PC-9 (cell line): ENCODE measurements at regions of chr18 and their contacts with region 1.

Region 1: GRCh38 chr18:9731380-9731779 is 23.3 kb downstream of the RAB31 start:
- DNase-seq: peak in 1 of 2 experiments; percentile 60
- H3K4me3 ChIP-seq: no peak overlapping the region
- H3K27ac ChIP-seq: peak overlapping the region; percentile 45; the same call in 1 of the 2 replicates
- H3K4me1 ChIP-seq: peaks cover 48% of the 10 kb centered on the region
- H3K27me3 ChIP-seq: no peaks in the 10 kb centered on the region
- CTCF ChIP-seq: no peak

Region 2: DNA sequence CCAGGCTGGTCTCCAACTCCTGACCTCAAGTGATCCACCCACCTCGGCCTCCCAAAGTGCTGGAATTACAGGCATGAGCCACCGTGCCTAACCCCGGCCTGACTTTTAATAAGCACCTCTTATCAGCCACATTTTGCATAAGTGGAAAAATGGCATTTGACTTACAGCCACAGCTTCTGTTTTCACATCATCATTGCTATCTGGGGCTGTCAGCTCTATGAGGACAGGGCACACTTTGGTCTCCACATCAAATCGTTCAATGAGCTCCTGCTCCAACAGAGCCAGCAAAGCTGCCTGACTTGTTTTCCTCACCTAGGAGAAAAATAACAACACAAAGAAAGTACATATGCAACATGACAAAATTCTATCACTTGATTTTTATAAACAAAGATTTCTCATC is 143.5 kb before region 1 on chr18:
- CTCF ChIA-PET with region 1: no interaction called
- POLR2A ChIA-PET with region 1: interaction called, 11 read pairs
- intact Hi-C with region 1: no loop called
- DNase-seq: no peak
- H3K4me3 ChIP-seq: no peak overlapping the region
- H3K27ac ChIP-seq: no peak overlapping the region
- H3K4me1 ChIP-seq: no peaks in the 10 kb centered on the region
- H3K27me3 ChIP-seq: no peaks in the 10 kb centered on the region
- CTCF ChIP-seq: no peak

Region 3: DNA sequence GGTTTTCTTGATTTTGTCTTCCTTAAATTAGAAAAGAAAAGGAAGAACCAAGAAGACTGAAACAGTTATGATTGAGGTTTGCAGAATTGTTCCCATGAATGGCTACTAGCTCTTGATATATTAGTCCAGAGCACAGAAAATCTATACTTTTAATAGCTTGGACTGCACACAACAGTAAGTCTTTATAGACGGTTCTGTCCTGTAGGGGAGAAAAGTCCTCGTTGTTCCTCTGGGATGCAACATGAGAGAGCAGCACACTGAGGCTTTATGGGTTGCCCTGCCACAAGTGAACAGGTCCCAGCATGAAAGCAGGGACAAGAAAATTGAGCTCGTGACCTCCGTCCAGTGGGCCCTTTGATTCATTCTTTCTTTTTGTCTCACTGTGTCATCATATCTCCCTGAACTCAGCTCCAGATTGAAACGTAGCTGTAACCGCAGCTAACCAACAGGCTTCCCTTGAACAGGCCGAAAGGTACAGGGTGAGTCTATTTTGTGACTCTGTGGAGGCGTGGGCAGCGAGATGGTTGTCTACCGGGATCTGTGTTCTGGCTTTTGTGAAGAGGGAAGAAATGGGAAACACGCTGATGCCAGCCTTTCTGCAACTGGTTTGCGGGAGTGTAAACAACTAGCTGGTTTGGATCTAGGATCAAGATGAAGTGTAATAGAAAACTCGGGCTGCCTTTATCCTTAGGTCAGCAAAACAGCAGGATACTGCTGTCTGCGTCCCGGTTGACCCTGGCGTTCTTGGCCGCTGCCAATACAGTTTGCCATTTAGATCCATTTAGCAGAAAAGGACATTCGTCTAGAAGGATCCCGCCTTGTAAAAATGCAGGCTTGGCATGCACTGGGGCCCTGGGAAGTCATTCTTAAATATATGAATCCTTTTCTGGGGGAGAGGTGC is 18.5 kb after region 1 on chr18:
- CTCF ChIA-PET with region 1: no interaction called
- POLR2A ChIA-PET with region 1: interaction called, 11 read pairs
- intact Hi-C with region 1: no loop called
- DNase-seq: peak in 1 of 2 experiments; percentile 11
- H3K4me3 ChIP-seq: no peak overlapping the region
- H3K27ac ChIP-seq: no peak overlapping the region
- H3K4me1 ChIP-seq: peaks cover 3% of the 10 kb centered on the region
- H3K27me3 ChIP-seq: no peaks in the 10 kb centered on the region
- CTCF ChIP-seq: no peak

Region 4: DNA sequence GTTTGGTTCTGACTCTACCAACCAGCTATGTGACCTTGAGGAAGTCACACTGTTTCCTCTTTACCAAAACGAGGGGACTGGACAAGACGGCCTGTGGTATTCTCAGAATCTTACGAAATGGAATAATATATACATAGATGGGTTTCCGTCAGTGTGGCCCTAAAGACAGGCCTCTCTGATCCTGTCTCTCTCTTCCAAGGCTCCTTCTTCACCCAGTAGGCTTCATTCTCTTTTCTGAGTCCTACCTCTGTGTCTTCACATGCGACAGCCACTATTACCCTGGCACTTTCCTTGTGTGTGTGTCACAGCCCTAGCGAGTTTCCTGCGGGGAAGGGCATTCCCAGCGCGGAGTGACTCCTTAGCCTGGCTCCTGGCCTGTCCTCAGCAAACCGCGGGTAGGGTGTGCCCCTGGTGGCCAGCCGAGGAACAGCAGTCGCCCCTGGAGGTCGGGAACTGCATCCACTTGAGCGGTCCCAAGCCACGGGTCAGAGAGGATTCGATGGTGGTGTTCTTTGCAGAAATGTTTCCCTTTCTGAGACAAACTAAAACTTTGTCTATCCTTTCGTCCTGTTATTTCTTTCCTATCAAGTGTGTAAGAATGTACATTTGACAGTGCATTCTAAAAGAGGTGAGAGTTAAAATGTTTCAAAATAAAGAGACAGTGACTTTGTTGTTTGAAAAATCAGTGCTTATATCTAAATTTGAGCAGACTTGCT is 40.0 kb after region 1 on chr18:
- CTCF ChIA-PET with region 1: interaction called, 22 read pairs
- POLR2A ChIA-PET with region 1: no interaction called
- intact Hi-C with region 1: no loop called
- DNase-seq: peak in 1 of 2 experiments; percentile 81
- H3K4me3 ChIP-seq: no peak overlapping the region
- H3K27ac ChIP-seq: no peak overlapping the region
- H3K4me1 ChIP-seq: peaks cover 12% of the 10 kb centered on the region
- H3K27me3 ChIP-seq: no peaks in the 10 kb centered on the region
- CTCF ChIP-seq: peak; percentile 69

Region 5: GRCh38 chr18:9787712-9788111 is 56.3 kb after region 1 on chr18:
- CTCF ChIA-PET with region 1: no interaction called
- POLR2A ChIA-PET with region 1: no interaction called
- intact Hi-C with region 1: no loop called
- DNase-seq: no peak
- H3K4me3 ChIP-seq: no peak overlapping the region
- H3K27ac ChIP-seq: no peak overlapping the region
- H3K4me1 ChIP-seq: peaks cover 10% of the 10 kb centered on the region; the same call in 1 of the 2 replicates
- H3K27me3 ChIP-seq: no peaks in the 10 kb centered on the region
- CTCF ChIP-seq: no peak